ENCODE measurements at regions of chr7 and their contacts with region 1.

Region 1: DNA sequence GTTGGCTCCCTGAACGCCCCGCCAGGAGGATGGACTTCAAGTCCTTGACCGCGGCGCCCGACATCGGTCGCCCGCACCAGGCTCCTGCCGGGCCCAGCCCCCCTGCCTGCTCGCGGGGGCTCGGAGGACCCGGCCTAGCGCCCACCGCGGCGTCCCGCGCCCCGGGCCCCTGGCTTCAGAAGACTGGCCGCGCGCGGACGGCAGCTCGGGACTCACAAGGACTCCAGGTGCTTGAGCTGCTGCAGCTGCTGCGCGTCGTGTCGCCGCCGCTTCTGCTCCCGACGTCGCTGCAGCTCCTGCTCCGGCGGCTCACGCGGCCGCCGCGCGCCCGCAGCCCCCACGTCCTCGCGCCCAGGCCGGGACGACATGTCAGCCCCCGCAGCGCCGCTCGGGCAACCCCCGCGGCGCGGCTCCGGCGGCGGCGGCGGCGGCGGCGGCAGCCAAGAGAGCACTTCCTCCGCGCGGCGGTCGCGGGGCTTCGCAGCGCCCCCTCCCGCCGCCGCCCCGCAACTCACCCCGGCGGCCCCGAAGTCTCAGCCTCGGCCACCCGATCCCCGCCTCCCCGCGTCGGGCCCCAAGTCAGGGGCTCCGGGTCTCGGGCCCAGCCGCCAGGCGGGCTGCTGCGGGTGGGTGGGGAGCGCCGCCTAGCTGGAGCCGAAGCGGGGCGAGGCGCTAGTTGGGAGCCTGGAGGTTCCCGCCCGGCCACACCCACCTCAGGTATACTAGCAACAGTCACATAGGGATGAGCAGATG is at the start of gene RP9:
- DNase-seq: peak; percentile 99
- H3K4me3 ChIP-seq: peak within 1 kb of the TSS; percentile 85 to 95
- H3K27ac ChIP-seq: peak within 1 kb of the TSS; percentile 57 to 80
- H3K4me1 ChIP-seq: peaks cover 5 to 15% of the 10 kb centered on the region in 2 experiments; a peak in 3 of 4 replicates
- H3K27me3 ChIP-seq: no peaks in the 10 kb centered on the region
- CTCF ChIP-seq: peak; percentile 61
- EP300 ChIP-seq: peak in 1 of 2 experiments; percentile 75; a peak in 1 of 4 replicates
- RAD21 ChIP-seq: peak; percentile 38
- polyA plus RNA-seq, gene RP9: 31.6 and 32.0 TPM in 2 replicates

Region 2: GRCh38 chr7:32462978-32463377 is 646.2 kb before region 1 on chr7:
- CTCF ChIA-PET with region 1: no interaction called
- POLR2A ChIA-PET with region 1: no interaction called
- DNase-seq: no peak
- H3K4me3 ChIP-seq: no peak overlapping the region
- H3K27ac ChIP-seq: no peak overlapping the region
- H3K4me1 ChIP-seq: no peaks in the 10 kb centered on the region
- H3K27me3 ChIP-seq: no peaks in the 10 kb centered on the region
- CTCF ChIP-seq: no peak
- EP300 ChIP-seq: no peak
- RAD21 ChIP-seq: no peak

Region 3: DNA sequence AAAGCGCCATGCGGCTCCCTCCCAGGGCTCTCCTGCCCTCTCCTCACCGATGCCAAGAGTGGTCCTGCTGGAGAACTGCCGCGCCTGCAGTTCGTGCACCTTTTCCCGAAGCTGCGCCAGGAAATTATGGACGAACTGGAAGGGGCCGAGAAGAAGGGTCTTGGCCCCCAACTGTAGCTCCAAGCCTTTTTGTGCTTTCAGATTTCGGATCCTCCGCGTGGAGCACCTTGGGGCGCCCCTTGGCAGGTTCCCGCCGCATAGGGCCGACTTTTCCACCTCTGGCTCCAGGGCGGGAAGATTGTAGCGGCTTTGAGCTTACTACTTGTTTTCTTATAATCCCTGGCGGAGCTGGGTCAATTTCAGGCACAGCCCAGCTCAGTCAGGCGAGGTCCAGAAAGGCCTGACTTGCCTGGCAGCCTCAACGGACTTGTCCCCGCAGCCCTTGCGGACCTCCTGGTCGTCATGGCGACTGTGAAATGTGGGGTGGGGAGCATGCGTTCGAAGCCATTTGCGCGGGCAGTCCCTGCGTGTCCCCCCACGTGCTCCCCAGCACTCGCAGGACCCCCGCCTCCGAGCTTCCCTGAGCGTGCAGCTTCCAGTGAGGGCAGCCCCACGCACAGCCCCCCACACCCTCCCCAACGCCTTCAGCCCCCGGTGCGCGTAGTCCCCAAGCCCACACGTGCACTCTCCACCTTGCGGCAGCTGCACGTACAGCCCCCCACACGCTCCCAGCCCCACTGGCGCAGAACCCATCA is 347.6 kb before region 1 on chr7:
- CTCF ChIA-PET with region 1: interaction called, 46 read pairs
- POLR2A ChIA-PET with region 1: interaction called, 3 read pairs
- DNase-seq: peak; percentile 30
- H3K4me3 ChIP-seq: no peak overlapping the region
- H3K27ac ChIP-seq: no peak overlapping the region
- H3K4me1 ChIP-seq: no peaks in the 10 kb centered on the region
- H3K27me3 ChIP-seq: no peaks in the 10 kb centered on the region
- CTCF ChIP-seq: no peak
- EP300 ChIP-seq: no peak
- RAD21 ChIP-seq: no peak

Region 4: DNA sequence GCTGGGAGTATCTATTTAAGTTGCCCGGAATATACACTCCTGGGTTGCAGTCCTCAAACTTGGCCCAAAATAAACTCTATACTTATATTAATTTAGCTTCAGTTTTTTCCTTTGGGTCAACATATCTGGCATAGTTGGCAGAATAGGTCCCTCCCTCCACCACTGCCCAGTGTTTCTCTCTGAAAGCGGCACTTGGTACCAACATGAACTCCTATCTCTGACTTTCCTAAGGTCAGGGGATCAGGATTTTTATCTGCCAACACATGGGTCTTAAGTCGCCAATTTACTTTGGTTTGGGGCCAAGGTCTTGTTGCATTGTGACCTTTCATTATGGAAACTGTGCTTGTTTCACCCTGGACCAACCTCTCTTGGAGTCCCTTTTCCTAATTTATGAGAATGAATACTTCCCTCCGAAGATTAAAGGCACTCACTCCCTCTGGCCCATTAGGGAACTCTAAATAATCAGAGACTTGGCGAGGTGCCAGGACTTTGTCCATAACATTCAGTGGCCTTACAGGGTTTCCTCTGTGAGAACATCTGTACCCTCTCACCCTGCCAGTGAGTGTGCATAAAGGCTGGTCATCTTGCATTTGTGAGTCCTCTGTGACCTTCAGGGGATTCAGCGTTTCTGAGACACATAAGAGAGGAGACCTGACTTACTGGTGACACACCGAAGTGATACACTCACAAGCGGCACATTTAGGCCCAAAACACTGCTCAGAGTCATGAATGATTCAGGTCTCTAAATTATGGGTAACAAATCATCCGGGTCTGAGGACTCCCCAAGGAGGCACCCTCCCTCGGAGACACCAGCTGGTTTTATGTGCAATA is 171.6 kb before region 1 on chr7:
- CTCF ChIA-PET with region 1: interaction called, 32 read pairs
- POLR2A ChIA-PET with region 1: no interaction called
- DNase-seq: peak; percentile 82
- H3K4me3 ChIP-seq: no peak overlapping the region
- H3K27ac ChIP-seq: peak overlapping the region; percentile 10 to 66; a peak in 3 of 4 replicates
- H3K4me1 ChIP-seq: peaks cover 15 to 18% of the 10 kb centered on the region in 2 experiments; a peak in 3 of 4 replicates
- H3K27me3 ChIP-seq: no peaks in the 10 kb centered on the region
- CTCF ChIP-seq: no peak
- EP300 ChIP-seq: no peak; a peak in 1 of 4 replicates
- RAD21 ChIP-seq: peak; percentile 1; the same call in 1 of the 2 replicates

Region 5: DNA sequence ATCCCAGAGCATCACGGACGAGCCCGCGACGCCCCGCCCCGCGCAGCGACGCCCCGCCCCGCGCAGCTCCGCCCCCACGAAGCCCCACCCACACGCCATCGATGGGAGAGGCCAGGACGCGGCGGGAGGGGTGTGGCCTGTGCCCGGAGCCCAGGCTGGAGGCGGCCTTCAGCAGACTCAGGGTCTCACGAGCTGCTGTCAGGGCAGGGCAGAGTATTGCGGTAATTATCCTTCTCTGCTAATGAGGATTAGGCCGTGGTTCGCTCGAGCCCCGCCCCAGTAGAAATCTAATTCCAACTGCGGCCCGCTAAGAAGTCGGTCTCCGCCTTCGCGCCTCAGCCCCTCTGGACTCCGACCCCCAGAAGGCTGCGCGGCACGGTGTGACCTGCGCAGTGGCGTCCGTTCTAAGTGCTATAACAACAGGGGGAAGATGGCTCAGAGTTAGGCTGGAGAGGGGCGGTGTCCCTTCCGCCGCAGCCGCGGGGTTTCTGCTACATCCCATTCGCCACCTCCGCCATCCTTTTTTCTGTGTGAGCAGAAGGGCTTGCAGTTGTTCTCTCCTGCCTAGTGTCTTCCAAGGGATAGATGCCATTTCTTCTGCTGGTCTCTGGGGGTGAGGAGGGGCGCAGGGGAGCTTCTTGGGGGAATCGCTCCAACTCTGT is 46.3 kb before region 1 on chr7:
- CTCF ChIA-PET with region 1: interaction called, 64 read pairs
- POLR2A ChIA-PET with region 1: interaction called, 8 read pairs
- DNase-seq: peak; percentile 99
- H3K4me3 ChIP-seq: peak overlapping the region; percentile 81 to 85
- H3K27ac ChIP-seq: peak overlapping the region; percentile 91 to 96
- H3K4me1 ChIP-seq: peaks cover 3 to 10% of the 10 kb centered on the region in 2 experiments; a peak in 2 of 4 replicates
- H3K27me3 ChIP-seq: no peaks in the 10 kb centered on the region
- CTCF ChIP-seq: no peak
- EP300 ChIP-seq: no peak
- RAD21 ChIP-seq: no peak

Region 6: DNA sequence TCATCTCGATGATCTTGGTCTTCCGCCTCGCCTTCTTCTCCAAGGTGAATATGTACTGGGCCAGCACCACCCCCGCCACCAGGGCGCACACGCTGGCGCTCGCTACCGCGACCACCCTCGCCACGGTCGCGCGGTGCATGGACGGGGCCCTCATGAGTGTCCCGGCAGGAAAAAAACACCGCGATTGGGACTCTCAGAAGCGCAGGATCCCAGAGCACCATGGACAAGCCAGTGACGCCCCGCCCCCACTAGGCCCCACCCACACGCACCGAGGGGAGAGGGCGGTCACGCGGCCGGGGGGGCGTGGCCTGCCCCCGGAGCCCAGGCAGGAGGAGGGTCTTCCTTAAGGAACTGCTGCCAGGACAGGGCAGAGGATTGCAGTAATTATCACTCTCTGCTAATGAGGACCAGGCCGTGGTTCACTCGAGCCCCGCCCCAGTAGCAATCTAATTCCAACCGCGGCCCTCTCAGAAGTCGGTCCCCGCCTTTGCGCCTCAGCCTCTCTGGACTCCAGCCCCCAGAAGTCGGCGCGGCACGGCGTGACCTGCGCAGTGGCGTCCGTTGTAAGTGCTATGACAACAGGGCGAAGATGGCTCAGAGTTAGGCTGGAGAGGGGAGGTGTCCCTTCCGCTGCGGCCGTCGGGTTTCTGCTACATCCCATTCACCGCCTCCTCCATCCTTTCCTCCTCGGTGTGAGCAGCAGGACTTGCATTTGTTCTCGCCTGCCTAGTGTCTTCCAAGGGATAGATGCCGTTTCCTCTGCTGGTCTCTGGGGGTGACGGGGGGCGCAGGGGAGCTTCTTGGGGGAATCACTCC is 20.0 kb after region 1 on chr7 and contains the start of gene BBS9:
- CTCF ChIA-PET with region 1: interaction called, 95 read pairs
- POLR2A ChIA-PET with region 1: interaction called, 4 read pairs
- DNase-seq: peak; percentile 100
- H3K4me3 ChIP-seq: peak within 1 kb of the TSS; percentile 78 to 91
- H3K27ac ChIP-seq: peak within 1 kb of the TSS; percentile 71 to 93
- H3K4me1 ChIP-seq: peaks cover 4 to 13% of the 10 kb centered on the region in 2 experiments; a peak in 2 of 4 replicates
- H3K27me3 ChIP-seq: no peaks in the 10 kb centered on the region
- CTCF ChIP-seq: peak; percentile 28
- EP300 ChIP-seq: peak in 1 of 2 experiments; percentile 39; a peak in 2 of 4 replicates
- RAD21 ChIP-seq: no peak
- polyA plus RNA-seq, gene BBS9: 7.5 and 11.1 TPM in 2 replicates

Region 7: GRCh38 chr7:34269084-34269483 is 1159.9 kb after region 1 on chr7:
- CTCF ChIA-PET with region 1: no interaction called
- POLR2A ChIA-PET with region 1: no interaction called
- DNase-seq: no peak
- H3K4me3 ChIP-seq: no peak overlapping the region
- H3K27ac ChIP-seq: no peak overlapping the region
- H3K4me1 ChIP-seq: no peaks in the 10 kb centered on the region; a peak in 1 of 4 replicates
- H3K27me3 ChIP-seq: no peaks in the 10 kb centered on the region
- CTCF ChIP-seq: no peak
- EP300 ChIP-seq: no peak
- RAD21 ChIP-seq: no peak

Measured in SK-N-SH (cell line).